Activated CD4-positive, alpha-beta T cell treated with anti-CD3 and anti-CD28 coated beads, Interleukin-2, amount 10 ng/mL, durations not matched to agents 7 days and 5 days (primary cell): ENCODE measurements at regions of chr9 and their contacts with region 1.

Region 1: GRCh38 chr9:95181226-95181818 is 136.2 kb downstream of the FANCC start:
- DNase-seq: no peak
- H3K4me3 Mint-ChIP-seq: no peak overlapping the region
- H3K27ac Mint-ChIP-seq: no peak overlapping the region
- H3K4me1 Mint-ChIP-seq: peaks cover 2% of the 10 kb centered on the region
- H3K27me3 Mint-ChIP-seq: no peaks in the 10 kb centered on the region

Region 2: DNA sequence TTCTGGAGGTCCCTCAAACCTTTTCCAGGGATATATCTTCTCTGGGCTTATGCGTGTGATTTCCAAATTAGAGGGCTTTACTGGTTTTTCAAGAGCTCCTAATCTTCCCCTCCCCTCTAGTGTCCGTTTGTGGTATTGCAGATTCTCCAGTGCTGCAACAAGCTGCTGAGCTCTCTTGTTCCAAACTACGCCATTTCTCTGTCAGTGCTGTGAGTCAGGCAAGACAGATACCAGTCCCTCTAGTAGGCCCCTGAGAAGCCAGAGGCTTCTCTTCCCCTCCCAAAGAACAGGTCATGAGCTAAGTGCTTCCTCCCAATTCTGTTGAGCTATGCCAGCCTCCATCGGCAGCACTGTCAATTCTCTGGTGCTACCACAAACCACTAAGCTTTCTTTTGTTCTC is 13.3 kb before region 1 on chr9:
- CTCF ChIA-PET with region 1: interaction called, 19 read pairs
- POLR2A ChIA-PET with region 1: no interaction called
- DNase-seq: peak; percentile 76
- H3K4me3 Mint-ChIP-seq: no peak overlapping the region
- H3K27ac Mint-ChIP-seq: no peak overlapping the region
- H3K4me1 Mint-ChIP-seq: peaks cover 14% of the 10 kb centered on the region
- H3K27me3 Mint-ChIP-seq: no peaks in the 10 kb centered on the region

Region 3: DNA sequence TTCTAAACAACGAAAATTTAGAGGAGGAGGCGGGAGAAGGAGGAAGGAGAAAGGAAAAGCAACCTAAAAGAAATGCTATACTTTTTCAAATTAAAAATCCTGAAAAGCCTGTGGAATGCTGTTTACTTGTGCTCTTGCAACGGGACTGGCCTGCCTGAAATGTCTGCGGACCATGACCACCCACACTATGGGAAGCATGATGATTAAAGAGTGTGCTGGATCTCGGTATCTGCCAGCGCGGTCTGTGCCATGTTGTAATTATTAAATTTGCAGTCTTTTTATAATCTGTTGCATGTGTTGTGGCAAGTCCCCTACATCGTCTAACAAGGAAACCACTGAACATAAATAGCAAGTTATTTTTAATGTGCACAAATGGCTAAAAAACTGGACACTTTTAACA is 24.8 kb after region 1 on chr9:
- CTCF ChIA-PET with region 1: no interaction called
- POLR2A ChIA-PET with region 1: no interaction called
- DNase-seq: no peak
- H3K4me3 Mint-ChIP-seq: no peak overlapping the region
- H3K27ac Mint-ChIP-seq: no peak overlapping the region
- H3K4me1 Mint-ChIP-seq: no peaks in the 10 kb centered on the region
- H3K27me3 Mint-ChIP-seq: no peaks in the 10 kb centered on the region